CD14-positive monocyte (primary cell): ENCODE measurements at regions of chr17 and their contacts with region 1.

Region 1: GRCh38 chr17:40264458-40265185 is 23.1 kb upstream of the CDC6 start:
- DNase-seq: no peak
- H3K4me3 ChIP-seq: no peak overlapping the region
- H3K4me3 Mint-ChIP-seq: no peak overlapping the region
- H3K27ac ChIP-seq: no peak overlapping the region
- H3K27ac Mint-ChIP-seq: peak overlapping the region in 2 of 7 donors; percentile 22 to 30
- H3K4me1 ChIP-seq: no peaks in the 10 kb centered on the region
- H3K4me1 Mint-ChIP-seq: no peaks in the 10 kb centered on the region
- H3K27me3 ChIP-seq: no peaks in the 10 kb centered on the region
- H3K27me3 Mint-ChIP-seq: peaks cover 0 to 2% (median 2%) of the 10 kb centered on the region in 3 donors
- CTCF ChIP-seq: no peak

Region 2: DNA sequence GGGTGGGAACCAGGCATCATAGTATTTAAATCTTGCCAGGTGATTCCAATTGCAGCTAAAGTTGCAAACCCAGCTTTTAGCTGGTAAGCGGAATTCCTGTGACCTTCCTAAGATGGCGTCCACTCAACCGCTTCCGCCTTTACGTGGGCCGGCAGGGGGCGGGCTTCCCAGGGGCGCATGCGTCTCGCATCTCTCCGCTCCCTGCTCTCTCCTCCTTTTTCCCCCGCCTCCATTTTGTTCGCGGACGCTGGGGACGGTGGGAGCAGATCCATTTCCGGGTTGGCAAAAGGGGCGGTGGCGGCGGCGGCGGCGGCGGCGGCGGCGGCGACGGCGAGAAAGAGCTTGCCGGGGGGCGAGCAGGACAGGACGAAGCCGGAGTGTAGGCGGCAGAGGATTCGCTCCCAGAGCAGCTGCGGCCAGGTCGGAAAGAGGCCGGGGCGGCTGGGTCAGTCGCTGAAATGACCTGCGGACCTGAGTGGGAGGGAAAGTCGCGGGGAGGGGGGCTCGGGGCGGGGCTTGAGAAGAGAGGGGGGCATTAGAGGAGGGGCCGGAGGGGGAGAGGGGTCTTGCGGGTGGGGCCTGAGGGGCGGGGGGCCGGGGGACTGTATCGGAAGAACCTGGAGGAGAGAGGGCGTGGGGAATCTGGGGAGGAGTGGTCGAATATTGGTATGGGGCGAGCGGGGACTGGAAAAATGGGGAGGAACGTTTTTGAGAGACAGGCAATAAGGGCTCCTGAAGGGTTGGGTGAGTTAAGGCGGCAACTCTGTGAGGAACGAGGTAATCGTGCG is 45.4 kb before region 1 on chr17 and contains the start of gene WIPF2:
- intact Hi-C with region 1: no loop called
- DNase-seq: peak; percentile 92 to 97 (median 96)
- H3K4me3 ChIP-seq: peak within 1 kb of the TSS; percentile 62 to 97 (median 94)
- H3K4me3 Mint-ChIP-seq: peak within 1 kb of the TSS; percentile 95 to 98
- H3K27ac ChIP-seq: peak within 1 kb of the TSS; percentile 41 to 99
- H3K27ac Mint-ChIP-seq: peak within 1 kb of the TSS; percentile 97 to 100 (median 99)
- H3K4me1 ChIP-seq: peaks cover 15 to 24% of the 10 kb centered on the region in 2 donors
- H3K4me1 Mint-ChIP-seq: peaks cover 32% of the 10 kb centered on the region
- H3K27me3 ChIP-seq: no peaks in the 10 kb centered on the region
- H3K27me3 Mint-ChIP-seq: no peaks in the 10 kb centered on the region
- CTCF ChIP-seq: peak; percentile 62
- polyA plus RNA-seq, gene WIPF2: 5.2 to 9.7 (median 8.4) TPM

Region 3: GRCh38 chr17:40230670-40231069 is 34.0 kb before region 1 on chr17:
- intact Hi-C with region 1: loop called in 1 of 2 experiments (anchors 5 kb)
- DNase-seq: no peak
- H3K4me3 ChIP-seq: no peak overlapping the region
- H3K4me3 Mint-ChIP-seq: no peak overlapping the region
- H3K27ac ChIP-seq: no peak overlapping the region
- H3K27ac Mint-ChIP-seq: no peak overlapping the region
- H3K4me1 ChIP-seq: peaks cover 12% of the 10 kb centered on the region in 2 donors
- H3K4me1 Mint-ChIP-seq: peaks cover 11% of the 10 kb centered on the region
- H3K27me3 ChIP-seq: no peaks in the 10 kb centered on the region
- H3K27me3 Mint-ChIP-seq: peaks cover 0 to 4% (median 0%) of the 10 kb centered on the region in 3 donors
- CTCF ChIP-seq: no peak